Naive thymus-derived CD8-positive, alpha-beta T cell (primary cell): ENCODE measurements at regions of chr12 and their contacts with region 1.

Region 1: DNA sequence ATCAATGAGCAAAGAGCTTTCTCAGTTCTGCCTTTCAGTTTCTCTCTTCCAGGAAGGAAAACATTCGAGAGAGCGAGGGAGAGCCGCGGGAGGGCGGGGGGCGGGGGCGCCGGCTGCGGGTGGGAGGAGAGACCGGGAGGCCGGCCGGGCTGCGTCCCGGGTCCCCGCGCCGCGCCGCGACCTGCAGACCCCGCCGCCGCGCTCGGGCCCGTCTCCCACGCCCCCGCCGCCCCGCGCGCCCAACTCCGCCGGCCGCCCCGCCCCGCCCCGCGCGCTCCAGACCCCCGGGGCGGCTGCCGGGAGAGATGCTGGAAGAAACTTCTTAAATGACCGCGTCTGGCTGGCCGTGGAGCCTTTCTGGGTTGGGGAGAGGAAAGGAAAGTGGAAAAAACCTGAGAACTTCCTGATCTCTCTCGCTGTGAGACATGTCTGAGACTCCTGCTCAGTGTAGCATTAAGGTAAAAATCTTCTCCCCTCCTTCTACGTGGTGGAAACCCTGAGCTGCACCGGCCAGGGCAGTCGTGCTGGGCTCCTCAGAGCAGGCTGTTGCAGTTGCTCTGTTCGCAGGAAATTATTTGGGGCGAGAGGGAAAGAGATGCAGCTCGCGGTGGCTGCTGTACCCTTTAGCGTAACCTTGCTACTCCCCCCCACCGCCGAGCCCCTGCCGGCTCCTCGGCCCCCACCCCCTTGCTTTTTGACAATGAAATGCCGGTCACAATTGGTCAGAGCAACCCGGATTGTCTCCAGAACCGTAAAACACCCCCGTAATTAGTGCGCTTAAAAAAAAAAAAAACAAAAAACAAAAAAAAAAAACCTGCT is 438 bp downstream of the ETV6 start:
- DNase-seq: peak in 8 of 10 donors; percentile 20 to 41 (median 31)
- ATAC-seq: peak; percentile 43 to 44
- H3K4me3 Mint-ChIP-seq: peak overlapping the region; percentile 93 to 99 (median 98)
- H3K27ac Mint-ChIP-seq: peak overlapping the region; percentile 94 to 99 (median 97)
- H3K4me1 Mint-ChIP-seq: peaks cover 17 to 47% (median 37%) of the 10 kb centered on the region in 4 donors
- H3K27me3 Mint-ChIP-seq: no peaks in the 10 kb centered on the region

Region 2: GRCh38 chr12:11545484-11546330 is 104.2 kb before region 1 on chr12:
- POLR2A ChIA-PET with region 1: interaction called, 12 read pairs
- DNase-seq: peak in 9 of 10 donors; percentile 12 to 87 (median 69)
- ATAC-seq: peak; percentile 80 to 84
- H3K4me3 Mint-ChIP-seq: peak overlapping the region; percentile 61 to 87 (median 75)
- H3K27ac Mint-ChIP-seq: peak overlapping the region; percentile 91 to 99 (median 97)
- H3K4me1 Mint-ChIP-seq: peaks cover 28 to 66% (median 54%) of the 10 kb centered on the region in 4 donors
- H3K27me3 Mint-ChIP-seq: no peaks in the 10 kb centered on the region

Region 3: DNA sequence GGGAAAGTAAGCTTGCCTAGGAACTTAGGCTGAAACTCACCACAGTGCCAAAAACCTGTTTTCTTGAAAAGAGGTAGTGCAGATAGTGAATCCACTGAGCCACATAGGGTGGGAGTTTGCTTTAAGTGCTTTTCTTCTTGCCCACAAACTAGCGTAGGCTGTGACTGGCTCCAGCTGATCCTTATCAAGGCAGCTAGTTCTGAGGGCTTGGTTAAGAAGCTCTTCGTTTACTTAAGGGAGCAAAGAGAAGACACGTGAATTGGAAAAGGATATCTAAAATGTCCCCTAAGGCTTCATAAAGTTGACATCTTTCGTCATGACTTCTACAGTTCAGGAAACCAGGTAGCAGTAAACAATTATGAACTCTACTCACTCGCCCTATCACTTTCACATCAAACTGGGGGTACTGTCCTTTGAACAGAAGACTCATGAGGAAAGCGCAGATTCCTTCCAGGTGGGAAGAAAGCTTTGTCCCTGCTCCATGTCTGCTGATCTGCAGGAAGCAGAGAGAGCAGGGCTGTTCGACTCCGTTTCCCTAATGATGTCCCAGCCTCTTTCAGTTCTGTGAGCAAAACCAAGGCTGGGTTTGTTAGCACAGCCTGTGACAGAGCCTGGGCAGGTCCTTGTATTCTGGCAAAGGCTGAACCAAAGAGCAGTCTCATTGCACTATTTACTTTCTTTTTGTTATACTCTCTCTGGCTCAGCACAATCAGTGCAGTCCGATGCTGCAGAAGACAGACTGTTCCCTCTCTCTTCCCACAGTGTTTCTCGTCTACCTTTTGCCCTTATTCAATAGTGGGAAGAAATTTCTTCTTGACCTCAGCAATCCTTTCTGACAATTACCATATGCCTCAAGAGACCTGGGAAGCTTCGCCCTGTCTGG is 93.9 kb before region 1 on chr12:
- POLR2A ChIA-PET with region 1: no interaction called
- DNase-seq: peak in 7 of 10 donors; percentile 6 to 62 (median 39)
- ATAC-seq: peak; percentile 73 to 81
- H3K4me3 Mint-ChIP-seq: peak overlapping the region; percentile 31 to 74 (median 60)
- H3K27ac Mint-ChIP-seq: peak overlapping the region; percentile 17 to 93 (median 80)
- H3K4me1 Mint-ChIP-seq: peaks cover 11 to 23% (median 21%) of the 10 kb centered on the region in 4 donors
- H3K27me3 Mint-ChIP-seq: no peaks in the 10 kb centered on the region